Activated CD8-positive, alpha-beta T cell treated with anti-CD3 and anti-CD28 coated beads for 36 hours (primary cell): ENCODE measurements at regions of chr2 and their contacts with region 1.

Region 1: GRCh38 chr2:69436938-69437750 is at the start of gene NFU1:
- DNase-seq: peak; percentile 95
- ATAC-seq: peak; percentile 94
- H3K4me3 Mint-ChIP-seq: peak within 1 kb of the TSS; percentile 97
- H3K27ac Mint-ChIP-seq: peak within 1 kb of the TSS; percentile 93
- H3K4me1 Mint-ChIP-seq: peaks cover 28% of the 10 kb centered on the region
- H3K27me3 Mint-ChIP-seq: no peaks in the 10 kb centered on the region
- CTCF ChIP-seq: peak; percentile 36
- total RNA-seq, gene NFU1: 41.0 to 46.2 TPM

Region 2: GRCh38 chr2:69453475-69454129 is 16.5 kb after region 1 on chr2:
- CTCF ChIA-PET with region 1: interaction called, 8 read pairs
- POLR2A ChIA-PET with region 1: interaction called, 25 read pairs
- intact Hi-C with region 1: no loop called
- DNase-seq: peak; percentile 60
- ATAC-seq: peak; percentile 96
- H3K4me3 Mint-ChIP-seq: peak overlapping the region; percentile 18
- H3K27ac Mint-ChIP-seq: peak overlapping the region; percentile 81
- H3K4me1 Mint-ChIP-seq: peaks cover 38% of the 10 kb centered on the region
- H3K27me3 Mint-ChIP-seq: no peaks in the 10 kb centered on the region
- CTCF ChIP-seq: no peak